SK-N-SH (cell line): ENCODE measurements at regions of chr2 and their contacts with region 1.

Region 1: GRCh38 chr2:134897932-134898331 is 20.7 kb upstream of the CCNT2 start:
- DNase-seq: peak; percentile 9
- H3K4me3 ChIP-seq: no peak overlapping the region
- H3K27ac ChIP-seq: no peak overlapping the region
- H3K4me1 ChIP-seq: no peaks in the 10 kb centered on the region; a peak in 1 of 4 replicates
- H3K27me3 ChIP-seq: no peaks in the 10 kb centered on the region
- CTCF ChIP-seq: peak; percentile 59
- EP300 ChIP-seq: no peak
- RAD21 ChIP-seq: peak; percentile 64

Region 2: DNA sequence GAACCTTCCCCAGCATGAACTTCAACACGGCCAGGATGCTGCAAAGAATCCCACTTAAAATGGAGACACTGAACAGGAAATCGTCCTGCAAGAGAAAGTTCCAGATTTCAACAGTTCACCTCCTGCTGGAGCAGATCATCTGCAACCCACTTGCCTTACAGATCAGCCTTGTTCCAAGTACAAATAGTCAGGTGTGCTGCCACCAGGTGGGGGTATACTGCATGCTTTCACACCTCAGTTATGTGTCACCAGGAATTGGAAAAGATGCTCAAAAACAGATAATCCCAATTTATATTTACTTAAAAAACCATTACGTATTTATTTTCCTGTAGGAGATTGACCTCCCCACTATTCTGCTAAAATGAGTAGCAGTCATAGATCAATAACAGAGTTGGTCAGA is 431.8 kb before region 1 on chr2:
- CTCF ChIA-PET with region 1: interaction called, 22 read pairs
- POLR2A ChIA-PET with region 1: no interaction called
- DNase-seq: peak; percentile 46
- H3K4me3 ChIP-seq: no peak overlapping the region
- H3K27ac ChIP-seq: no peak overlapping the region
- H3K4me1 ChIP-seq: peaks cover 0 to 5% of the 10 kb centered on the region in 2 experiments; a peak in 1 of 4 replicates
- H3K27me3 ChIP-seq: no peaks in the 10 kb centered on the region
- CTCF ChIP-seq: peak; percentile 16; the same call in 1 of the 2 replicates
- EP300 ChIP-seq: no peak
- RAD21 ChIP-seq: peak; percentile 63